PC-3 (cell line): ENCODE measurements at regions of chr3 and their contacts with region 1.

Region 1: DNA sequence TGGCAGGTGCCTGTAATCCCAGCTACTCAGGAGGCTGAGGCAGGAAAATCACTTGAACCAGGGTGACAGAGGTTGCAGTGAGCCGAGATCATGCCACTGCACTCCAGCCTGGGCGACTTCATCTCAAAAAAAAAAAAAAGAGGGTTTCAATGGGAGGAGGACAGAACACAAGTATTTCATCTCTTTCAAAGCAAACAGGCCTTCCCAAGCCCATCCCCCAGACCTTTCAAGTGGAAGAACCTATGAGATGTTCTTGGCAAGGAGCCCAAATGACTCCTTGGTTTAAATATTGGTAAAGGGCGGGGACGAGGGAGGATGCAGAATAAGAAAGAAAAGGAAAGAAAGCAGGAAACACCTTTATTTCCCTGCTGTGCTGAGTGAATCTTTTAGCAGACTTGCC is 62.3 kb upstream of the MCF2L2 start:
- DNase-seq: peak; percentile 94
- ATAC-seq: peak; percentile 63
- H3K4me3 ChIP-seq: no peak overlapping the region
- H3K27ac ChIP-seq: no peak overlapping the region
- H3K4me1 ChIP-seq: peaks cover 26% of the 10 kb centered on the region
- H3K27me3 ChIP-seq: no peaks in the 10 kb centered on the region
- CTCF ChIP-seq: no peak

Region 2: DNA sequence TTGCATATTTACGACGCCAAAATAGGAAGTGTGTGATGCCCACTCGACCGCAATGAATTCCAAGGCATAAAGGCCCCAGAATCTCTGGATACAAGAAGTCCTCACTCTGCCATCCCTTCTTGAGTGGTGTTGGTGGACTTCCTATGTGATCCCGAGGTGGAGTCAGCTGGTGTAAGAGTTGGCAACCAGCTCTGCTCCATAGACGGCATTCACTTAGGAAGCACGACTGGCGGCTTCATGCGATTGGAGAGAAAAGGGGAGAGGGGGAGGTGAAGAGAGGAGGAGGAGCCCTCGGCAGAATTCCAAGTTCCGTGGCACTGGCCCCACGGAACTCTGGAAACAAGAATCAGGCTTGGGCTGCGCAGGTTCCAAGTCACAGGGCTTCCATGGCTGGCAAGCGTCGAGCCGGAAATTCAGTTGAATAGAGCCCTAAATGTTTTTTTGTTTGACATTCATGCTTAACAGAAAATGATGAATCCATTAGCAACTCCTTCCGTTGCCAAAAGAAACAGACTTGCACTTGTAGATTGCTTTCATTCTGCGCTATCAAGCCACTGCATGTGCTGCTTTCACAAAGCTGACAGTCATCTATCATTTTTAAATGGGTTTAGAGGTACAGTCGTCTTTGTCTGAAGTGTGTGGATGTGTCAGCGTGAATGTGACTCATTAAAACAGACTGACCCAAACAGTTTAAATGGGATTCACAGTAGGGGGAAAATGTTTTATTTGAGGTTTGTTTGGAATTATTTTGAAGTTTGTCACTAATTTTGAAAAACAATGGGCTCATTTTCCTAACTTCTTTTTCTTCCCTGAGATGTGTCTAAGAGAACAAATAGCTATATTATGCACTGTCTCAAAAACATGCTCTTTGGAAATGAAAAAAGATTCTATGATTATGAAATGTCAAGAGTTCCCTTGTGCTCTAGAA is 1125.7 kb before region 1 on chr3:
- CTCF ChIA-PET with region 1: no interaction called
- POLR2A ChIA-PET with region 1: no interaction called
- intact Hi-C with region 1: no loop called
- DNase-seq: peak; percentile 66
- ATAC-seq: peak; percentile 89
- H3K4me3 ChIP-seq: peak overlapping the region; percentile 38; the same call in 1 of the 2 replicates
- H3K27ac ChIP-seq: no peak overlapping the region
- H3K4me1 ChIP-seq: peaks cover 16% of the 10 kb centered on the region
- H3K27me3 ChIP-seq: no peaks in the 10 kb centered on the region
- CTCF ChIP-seq: 0 out of 2 replicates have a peak, but pooled peaks have one; percentile 1

Region 3: GRCh38 chr3:183116025-183116614 is 374.6 kb before region 1 on chr3:
- CTCF ChIA-PET with region 1: no interaction called
- POLR2A ChIA-PET with region 1: no interaction called
- intact Hi-C with region 1: no loop called
- DNase-seq: peak; percentile 48
- ATAC-seq: peak; percentile 89
- H3K4me3 ChIP-seq: peak overlapping the region; percentile 67
- H3K27ac ChIP-seq: no peak overlapping the region
- H3K4me1 ChIP-seq: peaks cover 7% of the 10 kb centered on the region
- H3K27me3 ChIP-seq: no peaks in the 10 kb centered on the region
- CTCF ChIP-seq: no peak

Region 4: GRCh38 chr3:183427876-183428446 is 62.7 kb before region 1 on chr3:
- CTCF ChIA-PET with region 1: no interaction called
- POLR2A ChIA-PET with region 1: interaction called, 10 read pairs
- intact Hi-C with region 1: no loop called
- DNase-seq: peak; percentile 63
- ATAC-seq: peak; percentile 77
- H3K4me3 ChIP-seq: peak overlapping the region; percentile 81
- H3K27ac ChIP-seq: no peak overlapping the region
- H3K4me1 ChIP-seq: 0 out of 2 replicates have a peak, but pooled peaks cover 15% of the 10 kb centered on the region
- H3K27me3 ChIP-seq: no peaks in the 10 kb centered on the region
- CTCF ChIP-seq: no peak

Region 5: DNA sequence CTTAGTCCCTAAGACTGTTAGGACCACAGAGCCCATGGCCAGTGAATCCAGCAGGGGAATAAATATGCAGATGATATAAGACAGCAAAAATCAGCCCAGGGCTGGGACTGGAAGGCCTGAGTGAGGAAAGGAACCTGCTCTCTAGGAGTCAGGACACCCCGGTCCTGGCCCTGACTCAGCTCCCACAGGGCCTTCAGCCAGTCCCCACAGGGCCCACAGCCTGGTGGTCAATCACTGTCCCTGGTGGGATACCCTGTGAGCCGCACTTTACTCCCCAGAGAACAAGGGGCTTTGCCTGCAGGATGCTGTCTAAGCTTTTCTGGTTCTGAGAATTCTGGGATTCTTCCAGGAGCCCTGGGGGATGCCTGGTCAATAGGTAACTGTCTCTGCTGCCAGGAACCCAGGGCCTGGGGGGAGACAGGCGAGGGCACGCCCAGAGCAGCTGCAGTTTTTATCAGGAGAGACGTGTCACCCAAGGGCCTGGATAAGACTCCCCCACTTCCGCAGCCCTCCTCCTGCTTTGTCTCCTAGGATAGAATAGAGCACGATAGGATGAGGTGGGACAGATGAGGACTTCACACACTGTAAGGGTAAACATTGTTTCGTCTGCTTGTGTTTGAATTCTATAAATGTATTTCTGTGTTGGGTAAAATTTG is 12.7 kb before region 1 on chr3:
- CTCF ChIA-PET with region 1: no interaction called
- POLR2A ChIA-PET with region 1: no interaction called
- intact Hi-C with region 1: loop called (anchors 2 kb)
- DNase-seq: no peak
- ATAC-seq: no peak
- H3K4me3 ChIP-seq: no peak overlapping the region
- H3K27ac ChIP-seq: no peak overlapping the region
- H3K4me1 ChIP-seq: peaks cover 4% of the 10 kb centered on the region; the same call in 1 of the 2 replicates
- H3K27me3 ChIP-seq: peaks cover 5% of the 10 kb centered on the region; the same call in 1 of the 2 replicates
- CTCF ChIP-seq: no peak

Region 6: GRCh38 chr3:183766745-183767606 is 276.3 kb after region 1 on chr3:
- CTCF ChIA-PET with region 1: no interaction called
- POLR2A ChIA-PET with region 1: no interaction called
- intact Hi-C with region 1: no loop called
- DNase-seq: peak; percentile 86
- ATAC-seq: peak; percentile 93
- H3K4me3 ChIP-seq: no peak overlapping the region
- H3K27ac ChIP-seq: no peak overlapping the region
- H3K4me1 ChIP-seq: no peaks in the 10 kb centered on the region
- H3K27me3 ChIP-seq: no peaks in the 10 kb centered on the region
- CTCF ChIP-seq: peak; percentile 86